AG04450 (cell line): ENCODE measurements at regions of chr14 and their contacts with region 1.

Region 1: GRCh38 chr14:53539489-53540126 is 386.5 kb upstream of the DDHD1 start:
- DNase-seq: peak; percentile 70
- H3K4me3 ChIP-seq: no peak overlapping the region
- H3K27ac ChIP-seq: no peak overlapping the region
- H3K27me3 ChIP-seq: no peaks in the 10 kb centered on the region
- CTCF ChIP-seq: peak; percentile 92

Region 2: GRCh38 chr14:53411125-53411524 is 128.5 kb before region 1 on chr14:
- CTCF ChIA-PET with region 1: interaction called, 3 read pairs
- POLR2A ChIA-PET with region 1: interaction called, 14 read pairs
- DNase-seq: peak; percentile 97
- H3K4me3 ChIP-seq: no peak overlapping the region
- H3K27ac ChIP-seq: peak overlapping the region; percentile 69
- H3K27me3 ChIP-seq: no peaks in the 10 kb centered on the region
- CTCF ChIP-seq: no peak

Region 3: GRCh38 chr14:53501361-53502211 is 38.0 kb before region 1 on chr14:
- CTCF ChIA-PET with region 1: interaction called, 9 read pairs
- POLR2A ChIA-PET with region 1: interaction called, 19 read pairs
- DNase-seq: peak; percentile 90
- H3K4me3 ChIP-seq: no peak overlapping the region
- H3K27ac ChIP-seq: peak overlapping the region; percentile 71
- H3K27me3 ChIP-seq: no peaks in the 10 kb centered on the region
- CTCF ChIP-seq: no peak

Region 4: DNA sequence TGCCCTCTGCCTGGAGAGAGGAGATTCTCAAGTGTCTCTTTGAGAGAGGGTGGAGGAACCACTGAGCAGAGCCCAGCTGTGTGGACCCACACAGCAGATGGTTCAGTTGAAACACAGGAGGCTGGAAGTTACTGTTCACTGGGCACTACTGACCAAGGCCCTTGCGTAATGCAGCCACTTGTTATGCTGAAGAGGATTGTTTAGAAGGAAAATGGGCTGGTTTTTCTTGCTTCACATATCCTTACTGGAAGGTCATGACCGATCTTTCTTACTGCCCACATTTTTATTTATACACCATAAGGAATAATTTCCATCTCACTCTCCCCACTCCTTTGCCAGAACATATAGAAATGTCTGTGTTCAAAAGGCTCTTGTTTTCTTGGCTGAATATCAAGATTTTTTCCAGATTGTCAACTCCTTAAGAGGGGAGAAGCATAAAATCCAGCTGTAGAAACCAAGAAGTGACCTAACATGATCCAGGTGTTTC is 11.4 kb before region 1 on chr14:
- CTCF ChIA-PET with region 1: interaction called, 12 read pairs
- POLR2A ChIA-PET with region 1: interaction called, 30 read pairs
- DNase-seq: peak; percentile 90
- H3K4me3 ChIP-seq: no peak overlapping the region
- H3K27ac ChIP-seq: peak overlapping the region; percentile 52
- H3K27me3 ChIP-seq: no peaks in the 10 kb centered on the region
- CTCF ChIP-seq: no peak

Region 5: GRCh38 chr14:54175298-54175942 is 635.8 kb after region 1 on chr14:
- CTCF ChIA-PET with region 1: interaction called, 68 read pairs
- POLR2A ChIA-PET with region 1: no interaction called
- DNase-seq: peak; percentile 43
- H3K4me3 ChIP-seq: no peak overlapping the region
- H3K27ac ChIP-seq: no peak overlapping the region
- H3K27me3 ChIP-seq: peaks cover 10% of the 10 kb centered on the region
- CTCF ChIP-seq: peak; percentile 85

Region 6: DNA sequence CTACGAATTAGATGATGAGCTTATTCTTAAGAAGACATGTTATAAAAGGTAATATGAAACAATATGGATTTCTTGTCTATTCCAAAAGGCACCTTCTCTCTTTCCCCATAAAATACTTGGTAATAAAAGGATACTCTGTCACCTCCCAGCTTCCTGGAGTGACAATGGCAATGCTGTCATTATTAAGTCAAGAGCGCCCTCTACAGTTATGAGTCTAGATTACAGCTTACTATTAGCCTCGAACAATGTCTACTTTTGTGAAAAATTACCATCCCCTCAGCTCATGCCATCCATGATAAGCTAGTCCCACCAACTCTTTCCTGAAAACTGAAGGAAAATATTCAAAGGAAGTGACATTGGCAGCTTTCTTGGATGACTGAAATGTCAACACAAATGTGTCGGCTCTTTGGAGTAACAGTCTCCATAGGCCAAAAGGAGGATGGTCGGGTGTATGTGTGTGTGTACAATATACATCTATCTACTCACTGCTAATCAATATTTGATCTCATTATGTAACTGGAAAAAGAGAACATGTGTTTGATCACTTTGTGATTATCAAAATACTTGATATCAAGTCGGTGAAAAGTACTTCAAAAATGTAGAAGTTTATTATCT is 808.5 kb after region 1 on chr14:
- CTCF ChIA-PET with region 1: interaction called, 54 read pairs
- POLR2A ChIA-PET with region 1: no interaction called
- DNase-seq: no peak
- H3K4me3 ChIP-seq: no peak overlapping the region
- H3K27ac ChIP-seq: no peak overlapping the region
- H3K27me3 ChIP-seq: peaks cover 7% of the 10 kb centered on the region
- CTCF ChIP-seq: peak; percentile 63